GM12878 (cell line): ENCODE measurements at regions of chr1 and their contacts with region 1.

Region 1: DNA sequence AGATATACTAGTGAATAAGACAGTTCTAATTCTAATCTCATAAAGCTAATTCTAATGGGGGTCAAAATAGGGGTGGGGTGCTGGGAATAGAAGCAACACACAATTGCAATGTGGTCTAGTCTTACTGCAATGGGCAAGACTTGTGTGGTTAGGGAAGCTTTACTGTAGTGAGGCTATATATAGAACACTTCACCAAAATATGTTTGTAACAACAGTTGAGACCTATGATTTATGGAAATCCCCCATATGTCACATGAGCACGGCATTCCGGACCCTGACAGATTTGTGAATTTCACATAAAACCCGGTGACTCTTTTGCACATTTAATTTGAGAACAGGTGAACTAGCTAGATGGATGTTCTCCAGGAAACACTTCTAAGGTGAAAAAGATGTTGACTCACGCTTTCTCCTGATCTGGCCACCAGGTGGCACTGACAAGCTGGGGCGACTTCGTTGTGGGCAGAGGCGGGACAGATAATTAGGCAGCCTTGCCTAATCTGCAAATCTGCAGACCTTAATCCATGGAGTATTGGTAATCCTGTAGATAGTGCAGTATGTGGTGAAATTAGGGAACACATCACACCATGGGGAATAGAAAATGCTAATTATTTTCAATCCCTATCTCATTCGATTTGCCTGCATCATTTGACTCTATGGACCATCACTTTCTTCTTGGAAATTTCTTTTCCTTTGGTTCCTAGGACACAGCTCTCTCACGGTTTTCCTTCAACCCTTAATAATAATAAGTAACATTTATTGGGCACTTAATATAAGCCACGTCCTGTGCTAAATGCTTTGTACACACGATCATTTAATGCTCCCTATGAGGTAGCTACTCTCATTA is 37.7 kb downstream of the KIAA0040 start:
- DNase-seq: no peak
- ATAC-seq: peak; percentile 81
- H3K4me3 ChIP-seq: no peak overlapping the region
- H3K27ac ChIP-seq: no peak overlapping the region
- H3K4me1 ChIP-seq: peaks cover 7% of the 10 kb centered on the region; the same call in 1 of the 2 replicates
- H3K27me3 ChIP-seq: peaks cover 0 to 5% of the 10 kb centered on the region in 2 experiments; a peak in 2 of 4 replicates
- CTCF ChIP-seq: peak; percentile 88 to 91 (median 88)
- EP300 ChIP-seq: no peak
- POLR2A ChIP-seq: no peak
- RAD21 ChIP-seq: peak; percentile 99

Region 2: DNA sequence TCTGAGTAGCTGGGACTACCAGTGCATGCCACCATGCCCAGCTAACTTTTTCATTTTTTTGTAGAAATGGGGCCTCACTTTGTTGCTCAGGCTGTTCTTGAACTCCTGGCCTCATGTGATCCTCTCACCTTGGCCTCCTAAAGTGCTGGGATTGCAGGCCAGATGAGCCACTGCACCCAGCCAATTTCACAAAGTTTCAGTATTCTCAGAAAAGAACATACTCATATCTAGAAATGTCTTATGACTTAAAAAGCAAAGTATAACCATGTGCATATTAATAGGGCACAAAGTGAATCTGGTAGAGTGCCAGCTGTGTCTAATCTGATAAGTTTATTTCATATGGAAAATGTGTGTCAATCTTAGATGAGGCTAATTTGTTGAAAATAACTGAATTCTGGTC is 242.6 kb before region 1 on chr1:
- CTCF ChIA-PET with region 1: no interaction called
- POLR2A ChIA-PET with region 1: no interaction called
- RAD21 ChIA-PET with region 1: no interaction called
- SMC1A ChIA-PET with region 1: no interaction called
- in situ Hi-C with region 1: no loop called
- intact Hi-C with region 1: no loop called
- DNase-seq: peak; percentile 15
- ATAC-seq: peak; percentile 73
- H3K4me3 ChIP-seq: no peak overlapping the region
- H3K27ac ChIP-seq: no peak overlapping the region; the same call in 1 of the 2 replicates
- H3K4me1 ChIP-seq: peaks cover 15% of the 10 kb centered on the region; the same call in 1 of the 2 replicates
- H3K27me3 ChIP-seq: no peaks in the 10 kb centered on the region
- CTCF ChIP-seq: no peak
- EP300 ChIP-seq: no peak; a peak in 1 of 4 replicates
- POLR2A ChIP-seq: no peak
- RAD21 ChIP-seq: no peak

Region 3: DNA sequence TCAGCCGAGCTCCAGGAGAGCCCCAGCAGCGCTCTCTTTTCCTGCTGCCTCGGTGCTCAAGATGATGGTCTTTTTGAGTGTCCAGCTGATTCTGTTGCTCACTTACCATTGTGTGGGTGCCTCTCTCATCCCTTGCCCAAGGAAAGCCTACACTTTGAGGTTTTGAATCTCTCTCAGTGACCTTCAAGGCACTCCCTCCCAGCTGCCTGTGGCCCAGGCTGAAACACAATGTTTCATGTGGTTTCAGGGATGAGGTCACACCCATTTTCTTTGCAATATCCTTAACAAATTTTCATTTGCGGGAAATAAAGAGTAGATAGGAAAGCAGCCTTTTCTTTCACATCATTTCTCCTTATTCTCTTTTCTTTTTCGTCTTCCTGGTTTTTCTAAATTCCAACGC is 119.0 kb before region 1 on chr1:
- CTCF ChIA-PET with region 1: interaction called, 46 read pairs
- POLR2A ChIA-PET with region 1: no interaction called
- RAD21 ChIA-PET with region 1: interaction called, 5 read pairs
- SMC1A ChIA-PET with region 1: interaction called, 5 read pairs
- in situ Hi-C with region 1: no loop called
- intact Hi-C with region 1: no loop called
- DNase-seq: no peak
- ATAC-seq: no peak
- H3K4me3 ChIP-seq: no peak overlapping the region
- H3K27ac ChIP-seq: no peak overlapping the region
- H3K4me1 ChIP-seq: no peaks in the 10 kb centered on the region
- H3K27me3 ChIP-seq: peaks cover 0 to 3% of the 10 kb centered on the region in 2 experiments; a peak in 2 of 4 replicates
- CTCF ChIP-seq: no peak
- EP300 ChIP-seq: no peak
- POLR2A ChIP-seq: no peak
- RAD21 ChIP-seq: no peak

Region 4: DNA sequence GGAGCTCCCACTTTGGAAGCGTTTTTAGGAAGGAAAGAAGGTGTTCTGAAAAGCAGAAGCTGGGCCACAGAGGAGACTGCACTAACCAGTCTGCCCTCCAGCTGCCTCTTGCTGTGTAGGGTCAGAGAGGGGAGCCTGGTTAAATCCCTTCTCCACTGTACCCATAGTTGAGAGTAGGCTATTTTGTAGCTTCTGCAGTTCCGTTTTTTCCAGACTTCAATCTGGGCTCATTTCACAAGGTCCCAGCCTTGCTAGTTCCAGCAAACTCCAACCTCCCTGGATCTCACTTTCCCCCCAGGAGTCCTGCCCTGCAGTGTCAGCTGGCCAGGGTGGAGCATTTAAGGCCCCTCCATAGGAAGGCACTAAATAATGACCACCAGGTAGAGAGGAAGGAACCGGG is 76.2 kb before region 1 on chr1:
- CTCF ChIA-PET with region 1: no interaction called
- POLR2A ChIA-PET with region 1: no interaction called
- RAD21 ChIA-PET with region 1: no interaction called
- SMC1A ChIA-PET with region 1: no interaction called
- in situ Hi-C with region 1: no loop called
- intact Hi-C with region 1: no loop called
- DNase-seq: no peak
- ATAC-seq: no peak
- H3K4me3 ChIP-seq: no peak overlapping the region
- H3K27ac ChIP-seq: no peak overlapping the region
- H3K4me1 ChIP-seq: no peaks in the 10 kb centered on the region
- H3K27me3 ChIP-seq: peaks cover 2% of the 10 kb centered on the region in 2 experiments; a peak in 2 of 4 replicates
- CTCF ChIP-seq: no peak
- EP300 ChIP-seq: no peak
- POLR2A ChIP-seq: no peak
- RAD21 ChIP-seq: no peak

Region 5: GRCh38 chr1:175179845-175180590 is 25.2 kb after region 1 on chr1:
- CTCF ChIA-PET with region 1: interaction called, 66 read pairs
- POLR2A ChIA-PET with region 1: no interaction called
- RAD21 ChIA-PET with region 1: interaction called, 7 read pairs
- SMC1A ChIA-PET with region 1: interaction called, 6 read pairs
- in situ Hi-C with region 1: no loop called
- intact Hi-C with region 1: no loop called
- DNase-seq: no peak
- ATAC-seq: peak; percentile 31; the same call in 1 of the 3 replicates
- H3K4me3 ChIP-seq: no peak overlapping the region
- H3K27ac ChIP-seq: no peak overlapping the region
- H3K4me1 ChIP-seq: peaks cover 11% of the 10 kb centered on the region
- H3K27me3 ChIP-seq: no peaks in the 10 kb centered on the region
- CTCF ChIP-seq: no peak
- EP300 ChIP-seq: no peak
- POLR2A ChIP-seq: no peak
- RAD21 ChIP-seq: no peak

Region 6: GRCh38 chr1:175252561-175252960 is 97.7 kb after region 1 on chr1:
- CTCF ChIA-PET with region 1: interaction called, 8 read pairs
- POLR2A ChIA-PET with region 1: no interaction called
- RAD21 ChIA-PET with region 1: interaction called, 5 read pairs
- SMC1A ChIA-PET with region 1: interaction called, 11 read pairs
- in situ Hi-C with region 1: no loop called
- intact Hi-C with region 1: no loop called
- DNase-seq: peak; percentile 34
- ATAC-seq: peak; percentile 94
- H3K4me3 ChIP-seq: no peak overlapping the region
- H3K27ac ChIP-seq: no peak overlapping the region
- H3K4me1 ChIP-seq: 0 out of 2 replicates have a peak, but pooled peaks cover 3% of the 10 kb centered on the region
- H3K27me3 ChIP-seq: no peaks in the 10 kb centered on the region
- CTCF ChIP-seq: no peak
- EP300 ChIP-seq: peak; percentile 42 to 66; a peak in 2 of 4 replicates
- POLR2A ChIP-seq: no peak
- RAD21 ChIP-seq: no peak

Region 7: GRCh38 chr1:175319418-175320230 is 164.8 kb after region 1 on chr1:
- CTCF ChIA-PET with region 1: interaction called, 482 read pairs
- POLR2A ChIA-PET with region 1: interaction called, 10 read pairs
- RAD21 ChIA-PET with region 1: interaction called, 193 read pairs
- SMC1A ChIA-PET with region 1: interaction called, 268 read pairs
- in situ Hi-C with region 1: loop called (anchors 5 kb)
- intact Hi-C with region 1: loop called (anchors 1 kb)
- DNase-seq: peak; percentile 37
- ATAC-seq: peak; percentile 95
- H3K4me3 ChIP-seq: no peak overlapping the region
- H3K27ac ChIP-seq: no peak overlapping the region
- H3K4me1 ChIP-seq: no peaks in the 10 kb centered on the region
- H3K27me3 ChIP-seq: no peaks in the 10 kb centered on the region
- CTCF ChIP-seq: peak; percentile 88 to 96 (median 91)
- EP300 ChIP-seq: no peak
- POLR2A ChIP-seq: no peak
- RAD21 ChIP-seq: peak; percentile 94

Region 8: DNA sequence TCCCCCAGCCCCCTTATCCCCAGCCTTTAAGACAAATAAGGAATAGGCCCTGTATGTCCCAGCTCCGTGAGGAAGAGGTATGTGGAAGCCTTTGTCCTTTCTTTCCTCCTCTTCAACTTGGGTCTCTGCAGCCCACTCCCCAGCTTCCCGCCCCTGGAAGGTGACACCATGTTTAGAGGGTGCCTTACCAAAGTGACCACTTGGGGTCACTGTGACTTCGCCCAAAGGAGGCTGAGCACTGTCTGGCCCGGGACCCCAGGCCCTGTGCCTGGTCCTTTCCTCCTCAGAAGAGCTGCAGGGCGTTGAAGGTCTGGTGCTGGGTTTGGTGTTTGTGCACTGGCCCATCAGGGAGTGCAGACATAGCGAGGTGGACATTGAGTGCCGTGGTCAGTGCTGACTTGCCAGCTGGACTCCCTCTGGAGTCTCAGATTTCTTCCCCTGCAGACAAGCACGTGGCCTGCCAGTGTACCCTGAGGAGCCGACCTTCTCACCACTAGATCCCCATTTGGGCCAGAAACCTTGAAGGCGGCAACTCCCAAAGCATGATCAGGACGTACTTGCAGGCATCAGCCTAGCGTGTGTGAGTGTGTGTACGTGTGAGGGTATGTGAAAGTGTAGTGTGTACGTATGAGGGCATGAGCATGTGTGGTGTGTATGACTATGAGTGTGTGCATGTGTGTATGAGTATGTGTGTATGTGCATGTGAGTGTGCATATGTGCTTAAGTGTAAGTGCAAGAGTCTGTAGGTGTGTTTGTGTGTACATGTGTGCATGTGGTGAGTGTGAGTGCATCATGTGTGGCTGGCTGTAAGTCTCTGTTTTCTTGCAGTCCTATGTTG is 219.2 kb after region 1 on chr1:
- CTCF ChIA-PET with region 1: interaction called, 10 read pairs
- POLR2A ChIA-PET with region 1: no interaction called
- RAD21 ChIA-PET with region 1: interaction called, 8 read pairs
- SMC1A ChIA-PET with region 1: interaction called, 7 read pairs
- in situ Hi-C with region 1: no loop called
- intact Hi-C with region 1: no loop called
- DNase-seq: no peak
- ATAC-seq: peak; percentile 91
- H3K4me3 ChIP-seq: no peak overlapping the region
- H3K27ac ChIP-seq: no peak overlapping the region
- H3K4me1 ChIP-seq: no peaks in the 10 kb centered on the region
- H3K27me3 ChIP-seq: peaks cover 0 to 2% of the 10 kb centered on the region in 2 experiments; a peak in 3 of 4 replicates
- CTCF ChIP-seq: peak; percentile 65 to 79 (median 75)
- EP300 ChIP-seq: no peak
- POLR2A ChIP-seq: no peak
- RAD21 ChIP-seq: peak; percentile 81